ENCODE measurements at regions of chr16 and their contacts with region 1.

Region 1: DNA sequence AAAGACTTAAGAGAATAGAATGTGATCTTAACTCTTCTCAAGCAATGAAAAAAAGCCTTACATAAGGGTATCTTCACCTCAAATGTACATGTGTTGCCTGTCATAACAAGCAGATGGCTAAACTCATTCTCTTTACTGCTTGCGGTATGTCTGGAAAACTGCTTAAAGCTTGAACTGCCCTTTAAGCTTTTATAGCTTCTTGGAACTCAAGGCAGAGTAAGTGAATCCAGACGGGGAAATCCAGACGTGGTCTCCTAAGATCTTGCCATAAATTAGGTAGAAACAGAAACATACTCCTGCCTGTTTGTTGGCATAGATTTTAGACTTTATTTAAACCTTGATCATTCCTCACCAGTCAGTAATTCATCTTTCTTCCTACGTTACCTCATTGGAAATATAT is 19.6 kb downstream of the CLUAP1 start:
- DNase-seq: no peak
- ATAC-seq: no peak
- H3K4me3 Mint-ChIP-seq: no peak overlapping the region
- H3K27ac Mint-ChIP-seq: no peak overlapping the region
- H3K4me1 Mint-ChIP-seq: no peaks in the 10 kb centered on the region
- H3K27me3 Mint-ChIP-seq: no peaks in the 10 kb centered on the region
- CTCF ChIP-seq: no peak

Region 2: GRCh38 chr16:3645504-3646347 is 125.3 kb after region 1 on chr16:
- CTCF ChIA-PET with region 1: no interaction called
- POLR2A ChIA-PET with region 1: no interaction called
- intact Hi-C with region 1: loop called (anchors 10 kb)
- DNase-seq: no peak
- ATAC-seq: no peak
- H3K4me3 Mint-ChIP-seq: no peak overlapping the region
- H3K27ac Mint-ChIP-seq: no peak overlapping the region
- H3K4me1 Mint-ChIP-seq: peaks cover 3% of the 10 kb centered on the region
- H3K27me3 Mint-ChIP-seq: no peaks in the 10 kb centered on the region
- CTCF ChIP-seq: no peak

Measured in activated CD8-positive, alpha-beta T cell treated with anti-CD3 and anti-CD28 coated beads for 36 hours (primary cell).